SK-N-SH (cell line): ENCODE measurements at regions of chr3 and their contacts with region 1.

Region 1: GRCh38 chr3:46909535-46910442 is 32.3 kb downstream of the PTH1R start:
- DNase-seq: peak; percentile 94
- H3K4me3 ChIP-seq: peak overlapping the region in 1 of 2 experiments; percentile 30; a peak in 1 of 4 replicates
- H3K27ac ChIP-seq: no peak overlapping the region
- H3K4me1 ChIP-seq: peaks cover 11 to 19% of the 10 kb centered on the region in 2 experiments
- H3K27me3 ChIP-seq: no peaks in the 10 kb centered on the region
- CTCF ChIP-seq: peak; percentile 86
- EP300 ChIP-seq: no peak
- RAD21 ChIP-seq: peak; percentile 97

Region 2: GRCh38 chr3:46713898-46714552 is 195.8 kb before region 1 on chr3:
- CTCF ChIA-PET with region 1: interaction called, 11 read pairs
- POLR2A ChIA-PET with region 1: no interaction called
- DNase-seq: no peak
- H3K4me3 ChIP-seq: no peak overlapping the region
- H3K27ac ChIP-seq: no peak overlapping the region
- H3K4me1 ChIP-seq: no peaks in the 10 kb centered on the region
- H3K27me3 ChIP-seq: no peaks in the 10 kb centered on the region
- CTCF ChIP-seq: no peak
- EP300 ChIP-seq: no peak
- RAD21 ChIP-seq: no peak

Region 3: GRCh38 chr3:46866720-46867549 is 42.9 kb before region 1 on chr3:
- CTCF ChIA-PET with region 1: interaction called, 480 read pairs
- POLR2A ChIA-PET with region 1: interaction called, 3 read pairs
- DNase-seq: peak; percentile 86
- H3K4me3 ChIP-seq: peak overlapping the region in 1 of 2 experiments; percentile 48; a peak in 1 of 4 replicates
- H3K27ac ChIP-seq: no peak overlapping the region; a peak in 1 of 4 replicates
- H3K4me1 ChIP-seq: peaks cover 0 to 40% of the 10 kb centered on the region in 2 experiments; a peak in 1 of 4 replicates
- H3K27me3 ChIP-seq: no peaks in the 10 kb centered on the region
- CTCF ChIP-seq: peak; percentile 91
- EP300 ChIP-seq: no peak
- RAD21 ChIP-seq: peak; percentile 78

Region 4: DNA sequence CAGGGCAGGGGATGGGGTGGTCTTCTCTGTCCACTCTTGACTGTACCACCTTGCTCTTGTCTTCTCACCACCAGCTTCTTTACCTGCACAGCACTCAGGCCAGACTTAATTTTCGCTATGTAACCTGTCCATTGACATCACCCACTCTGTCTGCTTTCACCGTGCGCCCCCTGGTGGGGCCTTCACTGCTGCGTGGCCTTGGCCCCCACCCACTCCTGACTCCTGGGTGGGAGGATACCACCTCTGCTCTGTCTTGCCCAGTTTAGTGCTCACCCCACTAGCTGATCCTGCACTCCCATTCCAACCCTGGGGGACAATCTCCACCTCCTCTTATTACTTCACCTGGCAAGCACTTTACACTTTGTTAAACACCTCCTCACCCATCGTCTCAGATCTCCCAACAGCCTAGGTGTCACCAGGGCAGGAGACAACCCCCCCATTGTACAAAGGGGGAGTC is 14.6 kb before region 1 on chr3:
- CTCF ChIA-PET with region 1: interaction called, 57 read pairs
- POLR2A ChIA-PET with region 1: no interaction called
- DNase-seq: peak; percentile 85
- H3K4me3 ChIP-seq: no peak overlapping the region; a peak in 1 of 4 replicates
- H3K27ac ChIP-seq: no peak overlapping the region
- H3K4me1 ChIP-seq: peaks cover 0 to 32% of the 10 kb centered on the region in 2 experiments; a peak in 1 of 4 replicates
- H3K27me3 ChIP-seq: no peaks in the 10 kb centered on the region
- CTCF ChIP-seq: peak; percentile 90
- EP300 ChIP-seq: no peak
- RAD21 ChIP-seq: peak; percentile 85

Region 5: DNA sequence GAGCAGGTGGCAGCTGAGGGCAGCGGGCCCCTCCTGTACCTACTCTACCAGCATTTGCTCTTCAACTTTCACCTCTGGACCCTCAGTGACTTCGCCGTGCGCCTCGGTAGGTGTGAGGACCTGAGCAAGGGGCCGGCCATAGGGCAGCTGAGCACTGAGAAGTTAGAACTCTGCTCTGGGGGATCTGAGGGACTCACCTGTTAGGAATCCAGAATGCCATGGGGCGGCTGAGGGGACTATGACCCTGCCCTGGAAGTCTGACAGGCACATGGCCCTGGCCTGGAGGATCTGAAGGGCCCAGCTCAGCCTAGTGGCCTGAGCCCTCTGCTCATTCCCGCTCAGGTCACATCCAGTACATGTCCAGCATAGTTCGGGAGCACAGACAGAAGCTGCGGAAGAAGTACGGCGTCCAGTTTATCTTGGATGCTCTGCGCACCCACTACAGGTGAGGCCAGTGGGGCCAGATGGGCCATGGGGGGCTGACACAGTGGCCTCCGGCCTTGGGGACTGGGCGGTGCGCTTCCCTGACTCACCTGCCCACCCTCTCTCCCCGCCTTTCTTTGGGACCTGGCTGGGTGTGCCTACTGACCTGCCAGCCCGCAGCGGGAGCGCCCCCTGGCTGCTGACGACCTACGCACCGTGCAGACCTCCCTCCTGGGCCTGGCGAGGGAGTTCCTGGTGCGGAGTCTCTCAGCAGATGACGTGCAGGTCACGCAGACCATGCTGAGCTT is 88.5 kb after region 1 on chr3:
- CTCF ChIA-PET with region 1: interaction called, 12 read pairs
- POLR2A ChIA-PET with region 1: no interaction called
- DNase-seq: peak; percentile 90
- H3K4me3 ChIP-seq: peak overlapping the region in 1 of 2 experiments; percentile 32; a peak in 1 of 4 replicates
- H3K27ac ChIP-seq: no peak overlapping the region
- H3K4me1 ChIP-seq: peaks cover 0 to 2% of the 10 kb centered on the region in 2 experiments; a peak in 1 of 4 replicates
- H3K27me3 ChIP-seq: no peaks in the 10 kb centered on the region
- CTCF ChIP-seq: peak; percentile 72
- EP300 ChIP-seq: no peak
- RAD21 ChIP-seq: peak; percentile 75